ENCODE measurements at regions of chr5 and their contacts with region 1.

Region 1: GRCh38 chr5:177497292-177498033 is at the start of gene PDLIM7:
- H3K4me3 Mint-ChIP-seq: peak within 1 kb of the TSS; percentile 77
- H3K27ac Mint-ChIP-seq: peak within 1 kb of the TSS; percentile 73
- H3K4me1 Mint-ChIP-seq: peaks cover 82% of the 10 kb centered on the region
- H3K27me3 Mint-ChIP-seq: peaks cover 31% of the 10 kb centered on the region

Region 2: DNA sequence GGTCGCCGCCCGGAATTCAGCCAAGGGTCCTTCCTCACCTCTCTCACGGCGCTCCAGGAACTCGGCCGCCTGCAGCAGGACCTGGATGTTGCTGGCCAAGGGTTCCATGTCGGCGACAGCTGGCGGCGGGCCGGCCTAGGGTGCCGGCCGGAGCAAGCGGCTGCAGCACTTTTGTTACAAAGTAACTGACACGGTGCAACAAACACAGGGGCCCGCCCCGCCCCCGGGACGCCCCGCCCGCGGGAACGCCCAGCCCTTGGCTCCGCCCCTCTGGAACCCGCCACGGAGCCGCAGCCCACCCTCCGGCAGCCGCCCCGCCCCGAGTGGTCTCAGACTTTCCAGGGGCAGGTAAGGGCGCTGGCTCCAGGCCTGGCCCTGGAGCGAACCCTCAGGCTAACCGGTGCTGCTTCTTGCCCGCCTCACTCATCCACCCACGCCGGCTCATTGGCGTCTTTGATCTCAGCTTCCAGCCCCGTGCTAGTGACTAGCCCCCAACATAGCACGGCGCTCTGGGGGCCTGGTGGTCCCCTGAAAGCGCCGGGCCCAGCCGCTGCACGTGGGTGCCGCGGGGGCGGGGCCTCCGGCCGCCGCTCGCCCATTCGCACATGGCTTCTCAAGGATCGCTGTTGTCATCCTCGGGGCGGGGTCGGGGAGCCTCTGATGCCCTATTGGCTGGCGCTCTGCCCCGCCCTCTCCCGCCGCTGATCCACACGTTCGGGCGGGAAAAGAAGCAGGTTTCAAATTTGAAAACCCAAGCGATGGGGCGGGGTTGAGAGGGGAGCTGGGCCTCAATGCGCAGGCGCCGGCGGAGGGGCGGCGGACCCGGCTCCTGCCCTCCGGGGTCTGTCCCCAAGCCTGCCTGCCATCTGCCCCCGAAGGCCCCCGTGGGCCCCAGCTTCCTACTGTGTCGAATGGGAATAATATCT is 185.5 kb before region 1 on chr5 and contains the start of gene MXD3:
- intact Hi-C with region 1: loop called (anchors 10 kb)
- H3K4me3 Mint-ChIP-seq: peak within 1 kb of the TSS; percentile 81
- H3K27ac Mint-ChIP-seq: peak within 1 kb of the TSS; percentile 63
- H3K4me1 Mint-ChIP-seq: peaks cover 72% of the 10 kb centered on the region
- H3K27me3 Mint-ChIP-seq: peaks cover 2% of the 10 kb centered on the region

Region 3: GRCh38 chr5:177390363-177391300 is 106.8 kb before region 1 on chr5:
- intact Hi-C with region 1: loop called (anchors 5 kb)
- H3K4me3 Mint-ChIP-seq: no peak overlapping the region
- H3K27ac Mint-ChIP-seq: peak overlapping the region; percentile 85
- H3K4me1 Mint-ChIP-seq: peaks cover 54% of the 10 kb centered on the region
- H3K27me3 Mint-ChIP-seq: peaks cover 18% of the 10 kb centered on the region

Region 4: GRCh38 chr5:177516604-177517568 is 19.4 kb after region 1 on chr5 and contains the start of gene DDX41:
- intact Hi-C with region 1: loop called (anchors 1 kb)
- H3K4me3 Mint-ChIP-seq: peak within 1 kb of the TSS; percentile 95
- H3K27ac Mint-ChIP-seq: peak within 1 kb of the TSS; percentile 77
- H3K4me1 Mint-ChIP-seq: peaks cover 65% of the 10 kb centered on the region
- H3K27me3 Mint-ChIP-seq: no peaks in the 10 kb centered on the region

Measured in dendritic cell treated with granulocyte-macrophage colony-stimulating factor and Interleukin-4, amounts not matched to agents 40 ng/mL and 50 ng/mL, for 4 days (primary cell).